Activated B cell treated with CpG ODN at 0.5 μM for 24 hours (primary cell): ENCODE measurements at regions of chr3 and their contacts with region 1.

Region 1: GRCh38 chr3:4776980-4777581 is 202.2 kb upstream of the BHLHE40 start:
- DNase-seq: no peak
- ATAC-seq: peak; percentile 80
- H3K4me3 Mint-ChIP-seq: no peak overlapping the region
- H3K27ac Mint-ChIP-seq: peak overlapping the region; percentile 70
- H3K4me1 Mint-ChIP-seq: peaks cover 18% of the 10 kb centered on the region
- H3K27me3 Mint-ChIP-seq: no peaks in the 10 kb centered on the region
- CTCF ChIP-seq: no peak

Region 2: GRCh38 chr3:4765212-4765611 is 11.9 kb before region 1 on chr3:
- CTCF ChIA-PET with region 1: no interaction called
- POLR2A ChIA-PET with region 1: no interaction called
- intact Hi-C with region 1: loop called (anchors 2 kb)
- DNase-seq: no peak
- ATAC-seq: no peak
- H3K4me3 Mint-ChIP-seq: no peak overlapping the region
- H3K27ac Mint-ChIP-seq: peak overlapping the region; percentile 4
- H3K4me1 Mint-ChIP-seq: no peaks in the 10 kb centered on the region
- H3K27me3 Mint-ChIP-seq: no peaks in the 10 kb centered on the region
- CTCF ChIP-seq: no peak

Region 3: DNA sequence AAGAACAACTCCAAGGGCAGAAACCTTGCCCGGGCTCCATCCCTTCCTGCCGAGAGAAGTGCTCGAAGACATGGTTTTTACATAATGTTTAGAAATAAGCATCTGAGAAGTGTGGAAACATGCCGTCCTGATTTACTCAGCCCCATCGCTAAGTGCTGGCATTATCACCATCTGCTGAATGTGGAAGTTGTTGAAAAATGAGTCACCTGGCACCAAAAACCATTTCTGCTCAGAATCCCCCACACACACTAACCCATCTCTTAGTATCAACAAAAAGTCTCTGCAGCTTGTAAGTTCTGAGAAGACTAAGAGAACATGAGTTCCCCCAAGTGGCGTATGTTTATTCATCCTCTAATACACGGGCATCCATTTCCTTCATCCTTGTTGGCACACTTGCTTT is 294.0 kb after region 1 on chr3:
- CTCF ChIA-PET with region 1: no interaction called
- POLR2A ChIA-PET with region 1: no interaction called
- intact Hi-C with region 1: no loop called
- DNase-seq: no peak
- ATAC-seq: no peak
- H3K4me3 Mint-ChIP-seq: no peak overlapping the region
- H3K27ac Mint-ChIP-seq: no peak overlapping the region
- H3K4me1 Mint-ChIP-seq: no peaks in the 10 kb centered on the region
- H3K27me3 Mint-ChIP-seq: peaks cover 7% of the 10 kb centered on the region
- CTCF ChIP-seq: no peak